GM10248 (cell line): ENCODE measurements at regions of chr5 and their contacts with region 1.

Region 1: DNA sequence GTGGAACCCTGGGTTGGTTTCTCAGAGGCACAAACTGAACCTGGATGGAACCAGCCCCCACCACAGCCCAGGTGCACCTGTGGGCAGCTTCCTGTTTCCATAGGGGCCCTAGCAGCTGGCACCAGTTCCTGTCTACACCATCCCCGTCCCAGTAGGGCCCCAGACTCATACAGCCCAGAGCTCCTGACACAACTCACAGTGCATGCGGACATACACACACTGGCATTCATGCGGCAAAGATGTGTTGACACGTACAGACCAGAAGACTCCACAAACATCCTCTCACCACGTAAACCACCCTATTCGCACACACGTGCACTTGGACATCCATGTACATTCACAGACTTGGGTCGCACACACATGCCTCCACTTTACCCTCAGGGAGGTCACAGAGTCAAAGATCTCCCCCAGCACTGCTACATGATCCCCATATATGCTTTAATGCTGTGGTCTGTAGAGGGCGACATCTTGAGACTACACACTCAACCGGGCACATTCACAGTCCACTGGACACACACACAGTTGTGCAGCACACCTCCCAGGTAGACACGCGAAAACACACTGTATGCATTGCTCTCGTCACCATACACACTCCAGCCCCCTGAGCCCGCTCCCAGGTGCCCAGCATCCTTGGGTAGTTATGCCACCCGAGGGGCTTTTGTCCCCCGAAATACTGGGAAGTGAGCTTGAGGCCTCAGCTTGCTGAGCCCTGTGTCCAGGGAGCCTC is 22.4 kb downstream of the CXXC5 start:
- DNase-seq: peak; percentile 74
- CTCF ChIP-seq: peak; percentile 45

Region 2: GRCh38 chr5:139605887-139606286 is 64.6 kb before region 1 on chr5:
- CTCF ChIA-PET with region 1: no interaction called
- POLR2A ChIA-PET with region 1: no interaction called
- DNase-seq: no peak
- CTCF ChIP-seq: no peak

Region 3: GRCh38 chr5:139642891-139643871 is 27.4 kb before region 1 on chr5:
- CTCF ChIA-PET with region 1: interaction called, 136 read pairs
- POLR2A ChIA-PET with region 1: no interaction called
- DNase-seq: no peak
- CTCF ChIP-seq: no peak

Region 4: GRCh38 chr5:139651853-139652787 is 18.4 kb before region 1 on chr5:
- CTCF ChIA-PET with region 1: interaction called, 122 read pairs
- POLR2A ChIA-PET with region 1: interaction called, 7 read pairs
- DNase-seq: peak; percentile 93
- CTCF ChIP-seq: no peak